MCF 10A (cell line): ENCODE measurements at regions of chr1 and their contacts with region 1.

Region 1: GRCh38 chr1:182143154-182143657 is 81.7 kb upstream of the ZNF648 start:
- DNase-seq: peak; percentile 94
- H3K4me3 Mint-ChIP-seq: peak overlapping the region; percentile 28
- H3K27ac Mint-ChIP-seq: peak overlapping the region; percentile 97
- H3K4me1 Mint-ChIP-seq: peaks cover 53% of the 10 kb centered on the region
- H3K27me3 Mint-ChIP-seq: no peaks in the 10 kb centered on the region
- CTCF ChIP-seq: peak; percentile 95

Region 2: DNA sequence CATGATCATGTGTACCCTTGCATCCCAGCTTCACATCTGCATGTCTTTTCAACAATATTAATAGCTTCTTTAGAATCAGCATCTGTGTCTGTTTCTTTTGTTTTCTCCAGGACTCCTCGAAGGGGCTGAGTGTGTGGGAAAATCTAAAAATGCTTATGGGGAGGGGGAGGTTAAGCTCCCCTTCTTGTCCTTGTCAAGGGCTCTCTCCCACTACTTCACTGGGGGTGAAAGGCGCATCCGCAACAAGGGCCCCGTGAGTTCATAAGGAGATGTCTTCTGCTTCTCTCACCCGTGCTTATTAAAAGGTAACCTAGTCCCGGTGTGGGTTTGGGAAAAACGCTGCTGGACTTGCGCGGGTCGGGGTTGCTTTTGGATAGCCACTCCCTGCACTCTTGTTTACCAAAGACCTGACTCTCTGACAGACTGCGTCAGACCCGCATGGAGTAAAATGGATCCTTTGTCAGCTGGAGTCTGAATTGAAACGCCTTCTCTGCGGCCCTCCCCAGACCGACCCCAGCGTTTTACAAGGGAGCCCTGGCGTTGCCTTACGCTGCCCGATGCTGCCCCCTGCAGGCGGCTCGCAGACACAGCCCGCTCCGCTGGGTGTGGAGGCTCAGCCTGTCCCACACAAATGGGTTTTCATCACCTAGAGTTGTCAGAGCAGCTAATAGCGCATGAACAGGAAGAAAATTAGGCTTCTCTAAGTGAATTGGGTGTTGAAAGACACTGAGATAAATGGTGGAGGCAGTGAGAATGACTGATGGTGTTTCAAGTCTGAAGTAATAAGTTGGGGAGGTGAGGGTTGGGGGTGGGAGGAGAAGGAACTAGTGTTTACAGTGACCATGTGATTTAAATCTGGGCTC is 1000.9 kb before region 1 on chr1:
- CTCF ChIA-PET with region 1: no interaction called
- POLR2A ChIA-PET with region 1: no interaction called
- intact Hi-C with region 1: no loop called
- DNase-seq: peak; percentile 91
- H3K4me3 Mint-ChIP-seq: peak overlapping the region; percentile 40
- H3K27ac Mint-ChIP-seq: no peak overlapping the region
- H3K4me1 Mint-ChIP-seq: peaks cover 53% of the 10 kb centered on the region
- H3K27me3 Mint-ChIP-seq: no peaks in the 10 kb centered on the region
- CTCF ChIP-seq: peak; percentile 99

Region 3: GRCh38 chr1:181776044-181776443 is 367.2 kb before region 1 on chr1:
- CTCF ChIA-PET with region 1: no interaction called
- POLR2A ChIA-PET with region 1: no interaction called
- intact Hi-C with region 1: no loop called
- DNase-seq: no peak
- H3K4me3 Mint-ChIP-seq: no peak overlapping the region
- H3K27ac Mint-ChIP-seq: no peak overlapping the region
- H3K4me1 Mint-ChIP-seq: peaks cover 5% of the 10 kb centered on the region
- H3K27me3 Mint-ChIP-seq: no peaks in the 10 kb centered on the region
- CTCF ChIP-seq: no peak

Region 4: DNA sequence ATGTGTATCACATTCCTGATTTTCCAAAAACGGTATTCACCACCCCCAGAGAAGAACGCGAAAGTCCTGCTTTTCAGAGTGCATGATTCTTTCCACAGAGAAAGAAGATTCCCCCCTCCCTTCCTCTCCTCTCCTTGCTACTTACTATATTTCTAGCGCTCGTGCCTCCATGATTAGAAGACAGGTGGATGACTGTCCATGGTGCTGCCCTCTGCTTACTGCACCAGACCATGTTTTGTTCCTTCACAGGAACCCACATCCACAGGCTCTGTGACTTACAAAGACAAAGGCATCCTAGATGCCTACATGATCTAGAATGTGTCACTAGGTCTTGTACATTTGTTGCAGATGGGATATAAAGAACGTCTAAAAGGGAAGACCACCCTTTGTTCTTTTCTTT is 32.6 kb before region 1 on chr1:
- CTCF ChIA-PET with region 1: interaction called, 11 read pairs
- POLR2A ChIA-PET with region 1: interaction called, 3 read pairs
- intact Hi-C with region 1: no loop called
- DNase-seq: no peak
- H3K4me3 Mint-ChIP-seq: no peak overlapping the region
- H3K27ac Mint-ChIP-seq: no peak overlapping the region
- H3K4me1 Mint-ChIP-seq: peaks cover 14% of the 10 kb centered on the region
- H3K27me3 Mint-ChIP-seq: no peaks in the 10 kb centered on the region
- CTCF ChIP-seq: no peak

Region 5: GRCh38 chr1:182185813-182186756 is 42.9 kb after region 1 on chr1:
- CTCF ChIA-PET with region 1: interaction called, 163 read pairs
- POLR2A ChIA-PET with region 1: interaction called, 306 read pairs
- intact Hi-C with region 1: no loop called
- DNase-seq: peak; percentile 91
- H3K4me3 Mint-ChIP-seq: peak overlapping the region; percentile 10
- H3K27ac Mint-ChIP-seq: peak overlapping the region; percentile 81
- H3K4me1 Mint-ChIP-seq: peaks cover 58% of the 10 kb centered on the region
- H3K27me3 Mint-ChIP-seq: no peaks in the 10 kb centered on the region
- CTCF ChIP-seq: no peak

Region 6: GRCh38 chr1:182279724-182280503 is 136.7 kb after region 1 on chr1:
- CTCF ChIA-PET with region 1: interaction called, 12 read pairs
- POLR2A ChIA-PET with region 1: no interaction called
- intact Hi-C with region 1: no loop called
- DNase-seq: no peak
- H3K4me3 Mint-ChIP-seq: no peak overlapping the region
- H3K27ac Mint-ChIP-seq: no peak overlapping the region
- H3K4me1 Mint-ChIP-seq: no peaks in the 10 kb centered on the region
- H3K27me3 Mint-ChIP-seq: no peaks in the 10 kb centered on the region
- CTCF ChIP-seq: no peak

Region 7: GRCh38 chr1:182367926-182368325 is 224.7 kb after region 1 on chr1:
- CTCF ChIA-PET with region 1: interaction called, 12 read pairs
- POLR2A ChIA-PET with region 1: interaction called, 7 read pairs
- intact Hi-C with region 1: no loop called
- DNase-seq: no peak
- H3K4me3 Mint-ChIP-seq: no peak overlapping the region
- H3K27ac Mint-ChIP-seq: no peak overlapping the region
- H3K4me1 Mint-ChIP-seq: no peaks in the 10 kb centered on the region
- H3K27me3 Mint-ChIP-seq: no peaks in the 10 kb centered on the region
- CTCF ChIP-seq: no peak

Region 8: DNA sequence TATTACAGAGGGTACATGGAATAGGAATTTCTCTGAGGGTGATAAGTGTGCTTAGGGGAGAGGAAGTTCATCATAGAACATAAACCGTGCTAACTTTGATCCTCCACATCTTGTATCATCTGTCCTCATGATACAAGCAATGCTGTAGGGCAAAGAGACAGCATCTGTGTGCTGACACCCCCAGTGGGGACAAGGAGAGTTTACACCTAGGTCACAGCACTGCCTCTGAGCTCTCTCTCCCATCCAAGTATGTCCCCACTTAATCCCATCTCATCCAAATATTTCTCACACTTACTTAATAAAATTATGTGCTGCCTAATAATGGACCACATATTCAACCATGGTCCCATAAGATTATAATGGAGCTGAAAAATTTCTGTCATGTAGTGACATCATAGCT is 261.6 kb after region 1 on chr1:
- CTCF ChIA-PET with region 1: interaction called, 353 read pairs
- POLR2A ChIA-PET with region 1: no interaction called
- intact Hi-C with region 1: no loop called
- DNase-seq: no peak
- H3K4me3 Mint-ChIP-seq: no peak overlapping the region
- H3K27ac Mint-ChIP-seq: no peak overlapping the region
- H3K4me1 Mint-ChIP-seq: no peaks in the 10 kb centered on the region
- H3K27me3 Mint-ChIP-seq: no peaks in the 10 kb centered on the region
- CTCF ChIP-seq: no peak